BJ (cell line): ENCODE measurements at regions of chr13 and their contacts with region 1.

Region 1: DNA sequence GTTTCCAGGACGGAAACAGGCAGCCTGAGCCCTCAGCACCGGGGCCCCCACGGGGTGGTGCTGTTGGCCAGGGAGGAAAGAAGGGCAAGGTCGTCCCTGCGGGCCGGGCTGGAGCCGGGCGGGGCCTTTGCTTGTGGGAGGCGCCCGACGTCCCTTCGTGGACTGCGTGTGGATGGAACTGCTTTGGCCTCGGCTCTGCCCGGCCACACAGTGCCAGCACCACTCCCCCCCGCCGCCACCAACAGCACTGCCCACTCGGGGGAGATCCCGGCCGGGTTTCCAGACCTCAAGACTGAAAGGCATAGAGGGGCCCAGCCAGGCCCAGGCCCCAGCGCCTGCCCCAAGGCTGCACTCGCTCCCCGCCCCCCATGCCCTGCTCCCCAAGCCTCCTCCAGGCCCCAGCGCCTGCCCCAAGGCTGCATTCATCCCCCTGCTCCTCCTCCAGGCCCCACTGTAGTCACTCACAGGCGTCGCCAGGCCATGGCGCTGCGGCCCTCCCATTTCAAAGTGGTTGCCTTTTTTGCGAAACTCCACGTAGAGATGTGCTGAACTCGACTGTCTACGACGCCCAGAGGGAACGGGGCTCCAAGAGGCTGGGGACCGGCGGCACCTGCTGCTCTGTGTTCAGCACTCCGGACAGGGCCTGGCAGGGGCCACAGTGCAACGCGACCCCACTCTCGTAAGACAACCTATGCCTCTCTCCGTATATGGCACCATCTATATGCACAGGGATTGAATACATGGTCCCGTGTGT is 22.5 kb downstream of the C13orf46 start:
- DNase-seq: no peak
- H3K4me3 ChIP-seq: no peak overlapping the region
- H3K27me3 ChIP-seq: no peaks in the 10 kb centered on the region
- CTCF ChIP-seq: peak; percentile 93

Region 2: DNA sequence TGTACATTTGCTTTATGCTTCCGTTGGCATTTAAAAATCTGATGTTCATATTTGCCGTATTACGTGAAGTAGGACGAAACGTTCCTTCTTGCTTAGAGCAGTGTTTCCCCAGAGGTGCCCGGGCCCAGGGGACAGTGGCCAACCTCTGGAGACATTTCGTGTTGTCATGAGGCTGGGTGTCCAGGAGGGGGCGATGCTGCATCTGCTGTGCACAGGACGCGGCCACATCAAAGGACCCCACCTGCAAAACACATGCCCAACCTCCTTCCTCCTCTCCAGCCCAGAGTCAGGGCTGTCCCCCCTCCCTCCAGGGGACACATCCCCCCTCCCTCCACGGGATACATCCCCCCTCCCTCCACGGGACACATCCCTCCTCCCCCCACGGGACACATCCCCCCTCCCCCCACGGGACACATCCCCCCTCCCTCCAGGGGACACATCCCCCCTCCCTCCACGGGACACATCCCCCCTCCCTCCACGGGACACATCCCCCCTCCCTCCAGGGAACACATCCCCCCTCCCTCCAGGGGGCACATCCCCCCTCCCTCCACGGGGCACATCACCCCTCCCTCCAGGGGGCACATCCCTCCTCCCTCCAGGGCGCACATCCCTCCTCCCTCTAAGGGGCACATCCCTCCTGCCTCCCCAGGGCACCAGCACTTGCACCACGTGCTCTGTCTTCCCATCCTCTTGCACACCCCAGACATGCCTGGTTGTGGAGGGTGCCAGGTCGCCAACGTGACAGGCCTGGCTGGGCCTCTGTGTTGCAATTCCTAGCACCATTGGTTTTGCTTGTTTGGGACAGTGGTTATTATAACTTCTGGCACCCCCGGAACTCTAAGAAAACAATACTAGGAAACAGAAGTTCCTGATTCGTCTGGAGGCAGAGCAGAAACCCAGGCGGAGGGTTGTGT is 134.2 kb before region 1 on chr13:
- CTCF ChIA-PET with region 1: interaction called, 31 read pairs
- POLR2A ChIA-PET with region 1: no interaction called
- DNase-seq: peak; percentile 38
- H3K4me3 ChIP-seq: no peak overlapping the region
- H3K27me3 ChIP-seq: no peaks in the 10 kb centered on the region
- CTCF ChIP-seq: peak; percentile 89

Region 3: DNA sequence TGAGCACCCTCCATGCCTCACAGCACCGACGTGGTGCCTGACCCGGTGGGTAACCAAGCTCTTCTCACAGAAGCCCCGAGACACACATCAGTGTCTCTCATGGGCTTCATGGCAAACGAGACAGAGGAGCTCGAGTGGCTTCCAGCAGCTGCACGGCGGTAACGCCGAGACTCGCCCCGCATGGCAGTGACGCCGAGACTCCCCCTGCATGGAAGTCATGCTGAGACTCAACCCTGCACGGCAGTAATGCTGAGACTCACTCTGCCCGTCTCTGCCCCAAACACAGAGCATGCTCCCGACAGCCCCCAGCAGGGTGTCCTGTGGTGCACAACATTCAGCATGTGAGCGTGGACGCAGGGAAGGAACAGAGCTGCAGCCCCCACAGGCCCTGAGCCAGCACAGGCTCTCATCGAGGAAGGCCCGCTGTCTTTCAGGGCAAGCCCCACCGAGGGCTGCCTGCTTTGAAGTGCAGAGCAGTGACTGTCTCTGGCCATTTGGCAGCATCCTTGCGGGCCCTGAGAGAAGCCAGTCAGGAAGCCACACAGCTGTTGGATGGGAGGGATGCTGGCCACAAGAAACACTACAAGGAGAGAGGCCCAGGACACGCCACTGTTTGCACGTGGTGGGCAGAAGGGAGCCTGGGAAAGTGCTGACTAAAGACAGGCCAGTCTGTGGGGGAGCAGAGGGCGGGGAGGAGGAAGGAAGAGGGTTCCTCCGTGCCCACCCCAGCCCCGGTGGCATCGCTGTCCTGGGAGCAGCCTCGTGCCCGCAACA is 97.0 kb before region 1 on chr13:
- CTCF ChIA-PET with region 1: interaction called, 11 read pairs
- POLR2A ChIA-PET with region 1: no interaction called
- DNase-seq: no peak
- H3K4me3 ChIP-seq: no peak overlapping the region
- H3K27me3 ChIP-seq: no peaks in the 10 kb centered on the region
- CTCF ChIP-seq: no peak

Region 4: DNA sequence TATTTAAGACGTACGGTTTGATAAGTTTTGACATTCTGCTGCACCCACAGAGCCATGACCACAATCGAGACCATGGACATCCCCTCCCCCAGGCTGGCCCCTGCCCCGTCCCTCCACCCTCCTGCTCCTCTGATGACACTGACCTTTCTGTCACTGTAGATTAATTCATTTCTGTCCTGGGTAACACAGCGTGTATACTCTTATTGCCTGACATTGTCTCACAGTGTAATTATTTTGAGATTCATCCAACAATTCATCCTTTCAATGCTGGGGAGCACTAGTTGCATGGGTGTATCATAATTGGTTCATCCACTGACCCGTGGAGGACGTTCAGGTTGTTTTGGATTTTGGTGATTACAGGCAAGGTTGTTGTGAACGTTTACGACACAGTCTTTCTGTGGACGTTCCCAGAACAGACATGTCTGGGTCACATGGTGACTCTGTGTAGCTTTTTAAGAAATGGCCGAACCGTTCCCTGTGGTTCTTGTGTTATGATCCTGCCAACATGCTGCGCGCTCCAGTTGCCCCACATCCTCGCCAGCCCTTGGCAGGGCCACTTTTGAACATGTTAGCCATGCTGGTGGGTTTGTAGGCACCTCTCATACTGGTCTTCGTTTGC is 19.5 kb before region 1 on chr13:
- CTCF ChIA-PET with region 1: interaction called, 10 read pairs
- POLR2A ChIA-PET with region 1: no interaction called
- DNase-seq: no peak
- H3K4me3 ChIP-seq: no peak overlapping the region
- H3K27me3 ChIP-seq: no peaks in the 10 kb centered on the region
- CTCF ChIP-seq: no peak

Region 5: GRCh38 chr13:114226699-114227323 is 275.4 kb after region 1 on chr13:
- CTCF ChIA-PET with region 1: interaction called, 42 read pairs
- POLR2A ChIA-PET with region 1: interaction called, 4 read pairs
- DNase-seq: peak; percentile 15
- H3K4me3 ChIP-seq: no peak overlapping the region
- H3K27me3 ChIP-seq: no peaks in the 10 kb centered on the region; the same call in 1 of the 2 replicates
- CTCF ChIP-seq: peak; percentile 94